ENCODE measurements at regions of chr10 and their contacts with region 1.

Region 1: GRCh38 chr10:91006001-91006751 is 85.3 kb upstream of the ANKRD1 start:
- DNase-seq: peak in 1 of 2 experiments; percentile 76
- H3K4me3 ChIP-seq: no peak overlapping the region
- H3K27ac ChIP-seq: no peak overlapping the region
- H3K4me1 ChIP-seq: no peaks in the 10 kb centered on the region
- H3K27me3 ChIP-seq: peaks cover 0 to 2% (median 0%) of the 10 kb centered on the region in 4 experiments; a peak in 1 of 7 replicates
- CTCF ChIP-seq: peak; percentile 23 to 87 (median 73)
- EP300 ChIP-seq: no peak
- POLR2A ChIP-seq: no peak
- RAD21 ChIP-seq: peak; percentile 92 to 93

Region 2: GRCh38 chr10:90817128-90817889 is 188.9 kb before region 1 on chr10:
- CTCF ChIA-PET with region 1: no interaction called
- POLR2A ChIA-PET with region 1: no interaction called
- DNase-seq: peak in 1 of 2 experiments; percentile 23
- H3K4me3 ChIP-seq: no peak overlapping the region
- H3K27ac ChIP-seq: no peak overlapping the region
- H3K4me1 ChIP-seq: peaks cover 0 to 20% (median 9%) of the 10 kb centered on the region in 4 experiments; a peak in 5 of 7 replicates
- H3K27me3 ChIP-seq: no peaks in the 10 kb centered on the region
- CTCF ChIP-seq: no peak
- EP300 ChIP-seq: no peak
- POLR2A ChIP-seq: no peak
- RAD21 ChIP-seq: no peak

Region 3: DNA sequence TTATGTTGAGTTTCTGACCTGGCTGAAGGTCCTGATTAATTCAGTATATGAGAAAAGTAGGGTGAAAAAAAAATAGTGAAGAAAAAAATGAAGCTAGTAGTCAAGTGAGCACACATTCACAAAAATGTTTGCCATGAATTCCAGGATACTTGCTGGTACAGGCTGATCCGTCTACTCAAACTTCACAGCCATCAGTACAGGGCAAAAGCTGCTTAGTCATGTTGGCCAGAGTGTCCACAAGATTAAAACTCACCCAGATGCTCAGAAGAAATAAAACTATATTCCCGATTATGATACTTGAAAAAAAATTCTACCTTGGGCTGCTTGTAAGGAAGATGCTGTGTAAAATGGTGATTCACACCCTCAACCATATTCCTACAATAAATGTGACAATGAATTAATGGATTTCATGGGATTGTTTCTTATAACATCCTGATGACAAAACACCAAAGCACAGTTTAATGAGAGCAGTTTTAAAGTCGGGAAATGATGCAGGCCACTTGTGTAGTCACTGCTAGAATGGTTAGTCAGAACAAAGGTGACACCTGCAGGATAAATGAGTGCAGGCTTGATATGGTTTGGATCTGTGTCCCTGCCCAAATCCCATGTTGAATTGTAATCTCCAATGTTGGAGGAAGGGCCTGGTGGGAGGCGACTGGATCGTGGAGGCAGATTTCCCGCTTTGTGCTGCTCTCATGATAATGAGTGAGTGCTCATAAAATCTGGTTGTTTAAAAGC is 36.1 kb before region 1 on chr10:
- CTCF ChIA-PET with region 1: interaction called, 21 read pairs
- POLR2A ChIA-PET with region 1: no interaction called
- DNase-seq: peak in 1 of 2 experiments; percentile 48
- H3K4me3 ChIP-seq: no peak overlapping the region
- H3K27ac ChIP-seq: no peak overlapping the region
- H3K4me1 ChIP-seq: no peaks in the 10 kb centered on the region
- H3K27me3 ChIP-seq: peaks cover 0 to 16% (median 7%) of the 10 kb centered on the region in 4 experiments; a peak in 5 of 7 replicates
- CTCF ChIP-seq: peak in 2 of 3 experiments; percentile 30; a peak in 3 of 4 replicates
- EP300 ChIP-seq: no peak
- POLR2A ChIP-seq: no peak
- RAD21 ChIP-seq: peak; percentile 47 to 59; a peak in 3 of 4 replicates

Region 4: DNA sequence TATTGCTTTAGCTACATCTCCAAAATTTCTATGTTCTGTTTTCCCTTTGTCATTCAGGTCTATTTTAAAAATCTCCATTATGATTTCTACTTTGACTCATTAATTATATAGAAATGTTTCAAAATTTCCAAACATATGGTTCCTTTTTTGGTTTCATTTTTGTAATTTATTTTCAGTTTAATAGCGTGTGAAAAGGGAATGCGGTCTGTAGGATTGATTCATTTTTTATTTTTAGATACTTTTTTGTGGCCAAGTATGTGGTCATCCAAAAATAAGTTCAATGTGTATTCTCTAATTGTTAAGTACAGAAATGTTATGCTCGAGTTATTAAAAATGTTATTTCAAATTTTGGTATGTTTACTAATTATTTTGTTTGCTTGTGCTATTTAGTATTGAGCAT is 12.8 kb before region 1 on chr10:
- CTCF ChIA-PET with region 1: interaction called, 12 read pairs
- POLR2A ChIA-PET with region 1: no interaction called
- DNase-seq: no peak
- H3K4me3 ChIP-seq: no peak overlapping the region
- H3K27ac ChIP-seq: no peak overlapping the region
- H3K4me1 ChIP-seq: no peaks in the 10 kb centered on the region
- H3K27me3 ChIP-seq: peaks cover 0 to 1% (median 0%) of the 10 kb centered on the region in 4 experiments; a peak in 3 of 7 replicates
- CTCF ChIP-seq: no peak
- EP300 ChIP-seq: no peak
- POLR2A ChIP-seq: no peak
- RAD21 ChIP-seq: no peak

Region 5: GRCh38 chr10:91022924-91023699 is 16.9 kb after region 1 on chr10:
- CTCF ChIA-PET with region 1: interaction called, 69 read pairs
- POLR2A ChIA-PET with region 1: no interaction called
- DNase-seq: no peak
- H3K4me3 ChIP-seq: no peak overlapping the region
- H3K27ac ChIP-seq: no peak overlapping the region
- H3K4me1 ChIP-seq: no peaks in the 10 kb centered on the region
- H3K27me3 ChIP-seq: no peaks in the 10 kb centered on the region
- CTCF ChIP-seq: no peak
- EP300 ChIP-seq: no peak
- POLR2A ChIP-seq: no peak
- RAD21 ChIP-seq: no peak

Region 6: GRCh38 chr10:91105269-91105668 is 99.1 kb after region 1 on chr10:
- CTCF ChIA-PET with region 1: no interaction called
- POLR2A ChIA-PET with region 1: no interaction called
- DNase-seq: no peak
- H3K4me3 ChIP-seq: no peak overlapping the region
- H3K27ac ChIP-seq: no peak overlapping the region
- H3K4me1 ChIP-seq: no peaks in the 10 kb centered on the region
- H3K27me3 ChIP-seq: no peaks in the 10 kb centered on the region
- CTCF ChIP-seq: no peak
- EP300 ChIP-seq: no peak
- POLR2A ChIP-seq: no peak
- RAD21 ChIP-seq: no peak

Region 7: GRCh38 chr10:91242940-91243339 is 236.8 kb after region 1 on chr10:
- CTCF ChIA-PET with region 1: interaction called, 125 read pairs
- POLR2A ChIA-PET with region 1: no interaction called
- DNase-seq: no peak
- H3K4me3 ChIP-seq: no peak overlapping the region
- H3K27ac ChIP-seq: no peak overlapping the region
- H3K4me1 ChIP-seq: peaks cover 0 to 5% (median 0%) of the 10 kb centered on the region in 4 experiments; a peak in 2 of 7 replicates
- H3K27me3 ChIP-seq: peaks cover 5 to 23% (median 9%) of the 10 kb centered on the region in 4 experiments
- CTCF ChIP-seq: no peak
- EP300 ChIP-seq: no peak
- POLR2A ChIP-seq: no peak
- RAD21 ChIP-seq: no peak

Region 8: DNA sequence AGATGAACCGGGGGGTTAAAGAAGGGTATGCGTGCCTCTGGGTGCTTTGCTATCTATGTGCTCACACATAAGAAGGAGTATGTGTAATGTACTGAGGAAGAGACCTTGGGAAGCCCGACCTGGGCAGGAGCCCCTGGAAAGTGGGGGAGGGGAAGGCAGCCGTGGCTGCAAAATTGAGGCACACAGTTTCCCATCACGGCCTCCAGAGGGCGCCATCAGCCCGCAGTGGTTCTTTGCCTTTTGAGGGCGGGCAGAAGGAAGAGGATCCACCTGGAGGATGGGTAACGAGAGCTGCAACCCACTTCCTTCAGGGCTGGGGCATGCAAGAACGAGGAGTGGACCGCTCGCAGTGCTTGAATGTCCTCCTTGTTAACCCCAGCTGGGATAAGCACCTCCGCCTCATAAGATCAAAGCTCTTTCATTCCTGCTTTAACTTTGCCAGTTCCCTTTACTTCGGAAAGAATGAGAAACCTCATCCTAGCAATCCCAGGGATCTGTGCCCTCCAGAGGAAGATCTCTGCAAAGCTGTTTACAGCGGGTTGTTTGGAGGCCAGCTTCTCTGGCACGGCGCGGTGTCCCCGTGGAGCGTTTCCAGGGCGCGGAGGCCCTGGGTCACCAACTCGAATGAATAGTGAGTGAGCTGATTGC is 292.2 kb after region 1 on chr10:
- CTCF ChIA-PET with region 1: interaction called, 15 read pairs
- POLR2A ChIA-PET with region 1: no interaction called
- DNase-seq: peak; percentile 78 to 93
- H3K4me3 ChIP-seq: peak overlapping the region; percentile 14 to 47 (median 26); a peak in 6 of 8 replicates
- H3K27ac ChIP-seq: no peak overlapping the region
- H3K4me1 ChIP-seq: peaks cover 0 to 3% (median under 1%) of the 10 kb centered on the region in 4 experiments; a peak in 1 of 7 replicates
- H3K27me3 ChIP-seq: no peaks in the 10 kb centered on the region
- CTCF ChIP-seq: peak; percentile 89 to 97 (median 95)
- EP300 ChIP-seq: no peak
- POLR2A ChIP-seq: peak in 1 of 2 experiments; percentile 38; a peak in 1 of 3 replicates
- RAD21 ChIP-seq: peak; percentile 97

Measured in H1 (cell line).